ENCODE measurements at regions of chr11 and their contacts with region 1.

Region 1: GRCh38 chr11:25981998-25982397 is 349.9 kb upstream of the ANO3 start:
- DNase-seq: no peak
- H3K4me3 ChIP-seq: no peak overlapping the region
- H3K27ac ChIP-seq: no peak overlapping the region
- H3K4me1 ChIP-seq: peaks cover 0 to 8% (median 4%) of the 10 kb centered on the region in 4 donors
- H3K27me3 ChIP-seq: no peaks in the 10 kb centered on the region
- CTCF ChIP-seq: peak; percentile 49 to 62 (median 56)
- EP300 ChIP-seq: no peak
- POLR2A ChIP-seq: no peak

Region 2: GRCh38 chr11:25350899-25351803 is 630.8 kb before region 1 on chr11:
- intact Hi-C with region 1: no loop called
- DNase-seq: no peak
- H3K4me3 ChIP-seq: no peak overlapping the region
- H3K27ac ChIP-seq: no peak overlapping the region
- H3K4me1 ChIP-seq: no peaks in the 10 kb centered on the region
- H3K27me3 ChIP-seq: no peaks in the 10 kb centered on the region
- CTCF ChIP-seq: no peak
- EP300 ChIP-seq: no peak
- POLR2A ChIP-seq: no peak

Region 3: GRCh38 chr11:25794804-25795203 is 187.2 kb before region 1 on chr11:
- intact Hi-C with region 1: no loop called
- DNase-seq: no peak
- H3K4me3 ChIP-seq: no peak overlapping the region
- H3K27ac ChIP-seq: no peak overlapping the region
- H3K4me1 ChIP-seq: no peaks in the 10 kb centered on the region
- H3K27me3 ChIP-seq: no peaks in the 10 kb centered on the region
- CTCF ChIP-seq: no peak
- EP300 ChIP-seq: no peak
- POLR2A ChIP-seq: no peak

Region 4: DNA sequence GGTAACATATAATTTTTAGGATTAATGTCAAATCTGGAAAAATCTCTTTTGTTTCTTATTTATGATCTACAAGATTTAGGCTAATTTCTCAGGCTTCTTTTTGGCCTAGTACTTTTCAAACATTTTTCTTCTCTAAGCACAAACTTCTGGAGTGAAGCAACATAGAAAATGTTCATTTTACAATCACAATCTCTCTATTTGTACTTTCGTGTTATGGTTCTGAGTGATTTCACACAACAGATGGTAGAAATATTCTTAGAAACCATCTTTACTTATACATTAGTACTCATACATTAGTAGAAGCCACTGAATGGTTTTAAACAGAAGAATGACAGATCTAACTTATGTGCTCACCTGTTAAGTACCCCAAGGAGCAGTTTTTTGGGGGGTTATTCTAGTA is 243.6 kb after region 1 on chr11:
- intact Hi-C with region 1: loop called (anchors 2 kb)
- DNase-seq: no peak
- H3K4me3 ChIP-seq: no peak overlapping the region
- H3K27ac ChIP-seq: no peak overlapping the region
- H3K4me1 ChIP-seq: peaks cover 0 to 17% (median 10%) of the 10 kb centered on the region in 4 donors
- H3K27me3 ChIP-seq: no peaks in the 10 kb centered on the region
- CTCF ChIP-seq: no peak
- EP300 ChIP-seq: no peak
- POLR2A ChIP-seq: no peak

Region 5: DNA sequence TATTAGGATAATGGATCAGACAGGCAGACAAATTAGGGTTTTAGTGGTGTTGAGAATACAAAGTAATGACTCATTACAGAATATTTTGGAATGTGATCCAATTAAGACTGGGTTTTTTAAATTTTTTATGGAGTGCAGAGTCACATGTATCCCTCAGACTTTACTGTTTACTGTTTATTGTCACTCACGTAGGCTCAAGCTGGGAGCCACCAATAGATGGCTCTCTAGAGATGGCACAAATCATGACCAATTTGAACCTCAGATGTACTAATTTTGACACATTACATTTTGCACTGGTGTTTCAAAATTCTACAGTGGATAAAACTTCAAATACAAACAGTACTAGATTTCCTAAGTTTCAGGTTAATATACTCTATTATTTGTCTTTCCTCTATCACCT is 296.4 kb after region 1 on chr11:
- intact Hi-C with region 1: loop called (anchors 2 kb)
- DNase-seq: no peak
- H3K4me3 ChIP-seq: no peak overlapping the region
- H3K27ac ChIP-seq: no peak overlapping the region
- H3K4me1 ChIP-seq: peaks cover 0 to 4% (median 0%) of the 10 kb centered on the region in 4 donors
- H3K27me3 ChIP-seq: no peaks in the 10 kb centered on the region
- CTCF ChIP-seq: no peak
- EP300 ChIP-seq: no peak
- POLR2A ChIP-seq: no peak

Region 6: DNA sequence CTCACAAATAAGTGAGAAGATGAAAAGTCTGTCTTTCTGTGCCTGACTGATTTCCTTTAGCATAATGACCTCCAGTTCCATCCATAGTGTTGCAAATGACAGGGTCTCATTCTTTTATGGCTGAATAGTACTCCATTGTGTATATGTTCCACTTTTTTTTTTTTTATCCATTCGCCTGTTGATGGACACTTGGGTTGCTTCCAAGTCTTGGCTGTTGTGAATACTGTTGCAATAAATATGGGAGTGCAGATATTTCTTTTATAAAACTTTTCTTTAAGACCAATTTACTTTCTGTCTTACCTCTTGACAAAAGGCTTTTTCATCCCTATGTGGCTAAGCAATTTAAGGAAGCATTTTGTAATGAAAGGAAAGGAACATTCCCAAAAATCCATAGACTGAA is 485.5 kb after region 1 on chr11:
- intact Hi-C with region 1: no loop called
- DNase-seq: no peak
- H3K4me3 ChIP-seq: no peak overlapping the region
- H3K27ac ChIP-seq: no peak overlapping the region
- H3K4me1 ChIP-seq: no peaks in the 10 kb centered on the region
- H3K27me3 ChIP-seq: no peaks in the 10 kb centered on the region
- CTCF ChIP-seq: no peak
- EP300 ChIP-seq: no peak
- POLR2A ChIP-seq: no peak

Region 7: DNA sequence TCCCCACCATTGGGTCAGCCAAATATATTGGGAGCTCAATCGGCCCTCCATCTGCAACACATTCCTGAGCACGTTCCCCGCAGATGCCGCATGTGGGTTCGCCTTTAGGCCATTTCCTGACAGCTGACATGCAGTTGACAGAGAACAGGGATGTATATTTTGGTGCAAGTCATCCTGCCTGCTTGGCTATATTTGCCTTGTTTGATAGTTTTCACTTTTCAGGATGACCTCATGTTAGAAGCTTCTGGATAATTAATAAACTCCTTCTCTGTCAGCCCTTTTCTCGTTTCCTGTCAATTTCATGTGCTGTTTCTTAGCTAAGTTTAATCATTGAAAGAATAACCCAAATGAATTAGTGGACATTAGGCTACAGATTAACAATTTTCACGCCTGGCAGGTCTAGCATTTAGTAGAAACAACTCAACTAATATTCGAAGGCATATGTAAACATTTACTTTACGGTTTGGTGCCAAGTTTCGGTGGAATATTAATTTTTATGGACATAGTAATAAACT is 845.6 kb after region 1 on chr11:
- intact Hi-C with region 1: no loop called
- DNase-seq: no peak
- H3K4me3 ChIP-seq: no peak overlapping the region
- H3K27ac ChIP-seq: peak overlapping the region; percentile 62 to 74 (median 68)
- H3K4me1 ChIP-seq: peaks cover 0 to 21% (median 18%) of the 10 kb centered on the region in 4 donors
- H3K27me3 ChIP-seq: no peaks in the 10 kb centered on the region
- CTCF ChIP-seq: no peak
- EP300 ChIP-seq: peak; percentile 33
- POLR2A ChIP-seq: no peak

Measured in esophagus muscularis mucosa (tissue), 4 donors.